ENCODE measurements at regions of chr1 and their contacts with region 1.

Region 1: DNA sequence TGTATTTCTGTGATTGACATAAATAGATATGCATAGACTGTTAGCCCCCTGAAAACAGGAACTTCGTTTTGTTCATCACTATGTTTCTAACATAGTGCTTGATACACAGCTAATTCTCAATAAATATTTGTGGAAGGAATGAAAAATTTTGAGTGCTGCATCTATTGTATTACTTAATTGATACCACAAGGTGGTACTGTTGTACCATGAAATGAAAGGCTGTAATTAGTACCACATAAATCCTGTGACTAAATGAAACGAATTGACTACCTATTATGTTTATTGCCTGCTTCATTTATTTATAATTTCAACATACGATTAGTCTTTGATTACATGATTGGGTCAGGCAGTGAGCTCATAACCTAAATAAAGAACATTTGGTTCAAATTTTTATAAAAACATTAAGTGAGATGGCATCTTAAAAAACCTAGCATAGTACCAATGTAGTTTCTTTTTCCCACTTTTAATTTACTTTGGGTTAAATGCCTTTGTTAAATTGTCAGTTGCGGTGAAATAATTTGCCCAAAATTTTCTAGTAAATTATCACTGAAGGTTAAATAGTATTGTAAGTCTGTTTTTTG is 15.0 kb upstream of the TGFB2 start:
- DNase-seq: no peak
- H3K4me3 ChIP-seq: no peak overlapping the region
- H3K27ac ChIP-seq: no peak overlapping the region
- H3K4me1 ChIP-seq: no peaks in the 10 kb centered on the region
- H3K27me3 ChIP-seq: no peaks in the 10 kb centered on the region
- CTCF ChIP-seq: peak; percentile 34

Region 2: DNA sequence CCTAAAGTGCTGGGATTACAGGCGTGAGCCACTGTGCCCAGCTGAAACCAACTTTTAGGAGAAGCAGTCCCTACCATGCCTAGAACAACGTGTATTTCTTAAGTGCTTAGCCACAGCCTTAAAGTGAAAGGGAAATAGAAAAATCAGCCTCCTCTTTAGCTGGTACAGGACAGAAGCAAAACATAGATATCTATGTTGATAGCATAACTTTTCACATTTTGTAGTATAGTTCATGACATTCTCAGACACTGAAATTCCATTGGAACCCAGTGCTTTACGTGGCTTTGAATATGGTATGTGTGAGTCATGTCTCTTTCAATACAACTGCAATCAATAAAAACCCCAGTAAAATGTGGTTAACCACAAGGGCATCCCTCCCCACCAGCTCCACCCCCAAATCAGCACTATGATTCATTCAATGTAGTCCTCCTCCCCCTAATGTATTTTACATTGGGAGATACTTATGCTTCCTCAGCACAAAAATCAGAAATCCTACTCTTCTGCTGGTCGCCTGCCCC is 47.1 kb after region 1 on chr1:
- intact Hi-C with region 1: no loop called
- DNase-seq: no peak
- H3K4me3 ChIP-seq: no peak overlapping the region
- H3K27ac ChIP-seq: no peak overlapping the region
- H3K4me1 ChIP-seq: no peaks in the 10 kb centered on the region
- H3K27me3 ChIP-seq: no peaks in the 10 kb centered on the region
- CTCF ChIP-seq: no peak

Region 3: GRCh38 chr1:219566951-219567947 is 1237.1 kb after region 1 on chr1:
- intact Hi-C with region 1: loop called (anchors 10 kb)
- DNase-seq: no peak
- H3K4me3 ChIP-seq: no peak overlapping the region
- H3K27ac ChIP-seq: no peak overlapping the region
- H3K4me1 ChIP-seq: no peaks in the 10 kb centered on the region
- H3K27me3 ChIP-seq: no peaks in the 10 kb centered on the region
- CTCF ChIP-seq: no peak

Region 4: DNA sequence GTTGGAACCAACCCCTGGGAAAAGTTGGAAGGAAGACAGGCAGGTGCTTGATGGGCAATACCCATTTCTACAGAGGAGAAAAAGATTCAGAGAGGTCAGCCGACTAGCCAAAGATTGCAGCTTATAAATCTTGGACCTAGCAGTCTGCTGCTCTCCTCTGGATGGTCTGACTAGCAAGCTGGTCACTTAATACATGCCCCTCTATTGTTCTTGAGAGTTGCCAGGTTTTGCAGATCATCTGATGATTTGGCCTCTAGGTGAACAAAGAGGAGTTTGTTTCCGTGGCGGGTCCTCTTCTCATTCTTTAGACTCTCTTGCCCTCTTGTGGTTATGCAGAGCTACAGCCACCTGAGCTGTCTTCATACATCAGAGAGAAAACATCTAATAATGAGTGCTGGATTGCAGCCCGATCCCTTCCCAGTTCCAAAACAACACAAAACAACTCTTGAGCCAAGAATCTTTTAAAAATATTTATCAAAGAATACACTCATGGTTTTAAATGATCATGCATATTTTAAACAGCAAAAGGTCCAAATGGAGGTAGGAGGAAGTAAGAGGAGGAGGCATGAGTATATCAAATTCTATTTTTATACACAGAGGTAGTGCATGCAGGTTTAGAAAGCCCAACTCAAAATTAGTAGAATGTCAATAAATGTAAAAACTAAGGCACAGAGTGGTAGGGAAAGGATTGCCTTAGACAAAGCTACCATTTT is 1482.5 kb after region 1 on chr1:
- intact Hi-C with region 1: loop called (anchors 5 kb)
- DNase-seq: no peak
- H3K4me3 ChIP-seq: no peak overlapping the region
- H3K27ac ChIP-seq: no peak overlapping the region
- H3K4me1 ChIP-seq: no peaks in the 10 kb centered on the region
- H3K27me3 ChIP-seq: no peaks in the 10 kb centered on the region
- CTCF ChIP-seq: peak; percentile 48